B cell (primary cell): ENCODE measurements at regions of chr6 and their contacts with region 1.

Region 1: DNA sequence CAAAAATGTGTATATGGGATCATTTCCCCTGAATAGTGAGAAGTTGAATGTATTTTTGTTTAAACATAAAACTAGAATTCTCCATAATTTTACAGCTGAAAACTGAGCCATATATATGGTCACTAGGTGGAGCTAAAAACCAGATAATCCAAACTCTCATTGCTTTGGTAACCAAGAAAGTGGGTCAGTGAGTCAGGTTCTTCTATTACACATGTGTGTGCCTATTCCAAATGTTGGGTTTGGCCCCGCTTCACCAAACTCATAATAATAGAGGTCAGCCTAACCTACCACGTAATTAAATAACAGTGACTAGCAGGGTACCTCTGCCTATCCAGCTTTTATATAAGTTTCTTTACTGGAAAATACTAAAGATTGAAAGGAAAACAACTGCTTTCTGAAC is 19.3 kb upstream of the RNGTT start:
- DNase-seq: peak; percentile 73
- ATAC-seq: peak; percentile 63
- H3K4me3 ChIP-seq: no peak overlapping the region
- H3K4me3 Mint-ChIP-seq: no peak overlapping the region
- H3K27ac ChIP-seq: no peak overlapping the region
- H3K27ac Mint-ChIP-seq: no peak overlapping the region
- H3K4me1 ChIP-seq: no peaks in the 10 kb centered on the region
- H3K4me1 Mint-ChIP-seq: no peaks in the 10 kb centered on the region
- H3K27me3 ChIP-seq: no peaks in the 10 kb centered on the region
- H3K27me3 Mint-ChIP-seq: no peaks in the 10 kb centered on the region
- CTCF ChIP-seq: peak; percentile 88

Region 2: DNA sequence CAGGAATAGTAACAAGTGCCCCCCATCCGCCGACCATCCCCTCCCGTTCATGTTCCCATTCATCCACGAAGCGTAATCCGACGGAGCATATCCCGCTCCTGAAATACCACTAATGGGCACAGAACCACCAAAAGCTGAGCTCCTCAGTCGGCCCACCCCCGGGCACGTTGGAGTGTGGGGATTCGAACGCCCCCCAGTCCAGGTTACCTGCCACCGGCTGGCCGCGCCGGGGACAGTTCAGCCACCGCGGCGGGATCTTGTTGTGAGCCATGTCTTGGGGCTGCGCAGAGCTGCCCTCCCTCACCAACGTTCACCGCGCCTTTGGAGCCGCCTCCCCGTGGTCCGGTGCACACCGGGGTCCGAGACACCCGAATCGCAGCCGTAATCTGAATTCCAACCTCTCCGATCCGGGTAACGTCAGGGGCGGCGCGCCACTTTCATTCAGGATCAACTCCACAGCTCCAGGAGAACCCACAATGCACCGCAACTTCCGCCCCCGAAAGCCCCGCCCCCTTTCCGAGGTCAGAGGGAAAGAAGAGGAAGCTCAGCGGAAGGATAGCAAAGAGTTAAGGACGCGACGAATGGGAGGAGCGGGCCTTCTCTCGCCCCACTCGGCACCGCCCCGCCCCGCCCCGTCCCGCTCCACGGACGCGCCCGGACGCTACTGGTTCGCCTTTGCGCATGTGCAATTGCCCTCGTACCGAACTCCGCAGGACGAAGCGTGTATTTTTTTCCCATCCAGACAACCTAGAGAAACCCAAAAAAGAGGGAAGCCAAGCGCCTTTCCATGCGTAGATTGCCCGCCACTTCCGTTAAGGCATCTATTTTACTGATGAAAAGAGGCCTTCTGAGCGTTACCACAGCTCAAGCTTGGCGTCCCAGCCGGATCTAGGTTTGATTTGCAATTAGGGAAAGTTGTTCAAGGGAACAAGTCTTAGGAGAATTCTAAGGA is 19.3 kb before region 1 on chr6 and contains the start of gene RNGTT:
- CTCF ChIA-PET with region 1: interaction called, 14 read pairs
- POLR2A ChIA-PET with region 1: no interaction called
- intact Hi-C with region 1: no loop called
- DNase-seq: peak; percentile 97
- ATAC-seq: peak; percentile 100
- H3K4me3 ChIP-seq: peak within 1 kb of the TSS; percentile 92 to 94 (median 94)
- H3K4me3 Mint-ChIP-seq: peak within 1 kb of the TSS; percentile 98
- H3K27ac ChIP-seq: peak within 1 kb of the TSS; percentile 64 to 87
- H3K27ac Mint-ChIP-seq: peak within 1 kb of the TSS; percentile 96
- H3K4me1 ChIP-seq: peaks cover 10 to 17% of the 10 kb centered on the region in 2 donors
- H3K4me1 Mint-ChIP-seq: peaks cover 34% of the 10 kb centered on the region
- H3K27me3 ChIP-seq: no peaks in the 10 kb centered on the region
- H3K27me3 Mint-ChIP-seq: no peaks in the 10 kb centered on the region
- CTCF ChIP-seq: no peak
- total RNA-seq, gene RNGTT: 29.1 and 34.0 TPM in 2 replicates

Region 3: DNA sequence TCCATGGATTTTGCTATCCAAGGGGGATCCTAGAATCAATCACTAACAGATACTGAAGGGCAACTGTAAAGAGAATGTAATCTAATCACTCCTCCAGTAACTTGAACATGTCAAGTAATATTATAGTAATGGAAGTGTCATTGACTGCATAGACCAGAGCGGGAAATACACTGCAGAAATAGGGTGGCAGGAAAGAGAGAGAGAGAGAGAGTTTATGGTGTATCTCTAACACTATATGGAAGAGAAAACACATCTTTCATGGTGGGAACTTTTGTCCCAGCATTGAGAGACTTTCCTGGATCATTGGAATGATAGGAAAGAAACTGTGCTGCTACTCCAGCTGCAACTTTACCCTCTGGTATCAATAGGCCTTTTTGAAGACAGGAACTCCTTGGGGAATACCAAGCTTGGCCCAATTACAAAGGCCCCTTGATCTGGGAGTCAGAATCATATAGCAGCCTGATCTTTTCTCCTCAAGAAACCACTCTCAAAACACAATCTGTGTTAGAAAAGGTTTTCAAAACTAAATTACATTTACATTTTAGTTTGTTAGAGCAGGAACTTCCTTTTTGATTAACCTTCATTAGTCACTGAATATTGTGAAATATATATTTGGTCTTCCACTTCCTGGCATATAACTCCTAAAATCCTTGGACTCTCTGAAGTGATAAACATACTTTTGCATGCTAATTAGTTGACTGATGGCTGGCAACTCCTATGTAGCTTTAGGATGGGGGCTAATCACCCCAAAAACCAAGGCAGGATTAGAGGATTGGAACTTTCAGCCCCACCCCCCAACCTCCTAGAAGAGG is 10.2 kb after region 1 on chr6:
- CTCF ChIA-PET with region 1: interaction called, 11 read pairs
- POLR2A ChIA-PET with region 1: no interaction called
- intact Hi-C with region 1: no loop called
- DNase-seq: no peak
- ATAC-seq: no peak
- H3K4me3 ChIP-seq: no peak overlapping the region
- H3K4me3 Mint-ChIP-seq: no peak overlapping the region
- H3K27ac ChIP-seq: no peak overlapping the region
- H3K27ac Mint-ChIP-seq: no peak overlapping the region
- H3K4me1 ChIP-seq: no peaks in the 10 kb centered on the region
- H3K4me1 Mint-ChIP-seq: peaks cover 1% of the 10 kb centered on the region
- H3K27me3 ChIP-seq: no peaks in the 10 kb centered on the region
- H3K27me3 Mint-ChIP-seq: no peaks in the 10 kb centered on the region
- CTCF ChIP-seq: no peak

Region 4: DNA sequence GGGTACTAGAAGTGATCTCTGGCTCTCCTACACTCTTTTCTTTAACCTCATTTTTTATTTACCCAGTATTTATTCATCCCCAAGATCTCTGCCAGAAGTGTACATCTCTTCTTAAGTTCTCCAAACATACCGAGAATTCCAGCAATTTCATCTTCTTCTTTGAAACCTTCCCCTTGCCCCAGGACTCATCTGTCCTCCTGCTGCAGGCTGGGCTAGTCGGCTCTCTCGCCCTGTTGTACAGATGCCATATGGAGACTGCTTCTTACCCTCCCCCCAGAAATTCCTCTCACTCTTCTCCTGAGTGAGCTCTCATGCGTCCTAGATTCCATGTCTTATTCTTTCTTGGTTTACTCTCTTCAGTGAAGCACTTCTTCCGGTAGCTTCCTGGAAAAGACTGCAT is 75.9 kb after region 1 on chr6:
- CTCF ChIA-PET with region 1: no interaction called
- POLR2A ChIA-PET with region 1: no interaction called
- intact Hi-C with region 1: no loop called
- DNase-seq: no peak
- ATAC-seq: no peak
- H3K4me3 ChIP-seq: no peak overlapping the region
- H3K4me3 Mint-ChIP-seq: no peak overlapping the region
- H3K27ac ChIP-seq: no peak overlapping the region
- H3K27ac Mint-ChIP-seq: no peak overlapping the region
- H3K4me1 ChIP-seq: no peaks in the 10 kb centered on the region
- H3K4me1 Mint-ChIP-seq: no peaks in the 10 kb centered on the region
- H3K27me3 ChIP-seq: no peaks in the 10 kb centered on the region
- H3K27me3 Mint-ChIP-seq: peaks cover 12% of the 10 kb centered on the region
- CTCF ChIP-seq: no peak

Region 5: DNA sequence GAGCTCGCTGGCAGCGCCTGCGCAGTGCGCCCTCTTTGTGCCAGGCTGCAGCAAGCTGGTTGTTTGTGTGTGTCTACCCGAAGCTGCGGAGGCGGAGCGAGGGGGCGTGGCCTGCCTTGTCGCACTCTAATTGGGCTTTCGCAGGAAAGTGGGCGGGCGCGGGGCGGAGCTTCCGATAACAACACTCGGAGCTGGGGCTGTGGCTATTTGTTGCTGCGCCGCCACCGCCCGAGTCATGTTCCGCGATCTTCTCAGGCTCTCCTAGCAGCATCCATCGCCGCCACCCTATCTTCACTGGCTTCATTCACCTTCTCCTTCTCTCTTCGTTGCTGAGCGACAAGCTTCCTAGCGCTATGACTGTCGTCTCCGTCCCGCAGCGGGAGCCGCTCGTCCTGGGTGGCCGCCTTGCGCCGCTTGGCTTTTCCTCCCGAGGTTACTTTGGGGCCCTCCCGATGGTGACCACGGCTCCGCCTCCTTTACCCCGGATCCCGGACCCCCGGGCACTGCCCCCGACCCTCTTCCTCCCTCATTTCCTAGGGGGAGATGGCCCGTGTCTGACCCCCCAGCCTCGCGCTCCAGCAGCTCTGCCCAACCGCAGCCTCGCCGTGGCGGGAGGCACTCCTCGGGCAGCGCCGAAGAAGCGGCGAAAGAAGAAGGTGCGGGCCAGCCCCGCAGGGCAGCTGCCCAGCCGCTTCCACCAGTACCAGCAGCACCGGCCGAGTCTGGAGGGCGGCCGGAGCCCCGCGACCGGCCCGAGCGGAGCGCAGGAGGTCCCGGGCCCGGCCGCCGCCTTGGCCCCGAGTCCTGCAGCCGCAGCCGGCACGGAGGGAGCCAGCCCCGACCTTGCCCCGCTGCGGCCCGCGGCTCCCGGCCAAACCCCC is 98.1 kb after region 1 on chr6 and contains the start of gene PNRC1:
- CTCF ChIA-PET with region 1: interaction called, 33 read pairs
- POLR2A ChIA-PET with region 1: interaction called, 4 read pairs
- intact Hi-C with region 1: loop called (anchors 5 kb)
- DNase-seq: peak; percentile 100
- ATAC-seq: peak; percentile 76
- H3K4me3 ChIP-seq: peak within 1 kb of the TSS; percentile 81 to 100 (median 98)
- H3K4me3 Mint-ChIP-seq: peak within 1 kb of the TSS; percentile 99
- H3K27ac ChIP-seq: peak within 1 kb of the TSS; percentile 99
- H3K27ac Mint-ChIP-seq: peak within 1 kb of the TSS; percentile 98
- H3K4me1 ChIP-seq: peaks cover 25 to 29% of the 10 kb centered on the region in 2 donors
- H3K4me1 Mint-ChIP-seq: peaks cover 38% of the 10 kb centered on the region
- H3K27me3 ChIP-seq: no peaks in the 10 kb centered on the region
- H3K27me3 Mint-ChIP-seq: no peaks in the 10 kb centered on the region
- CTCF ChIP-seq: no peak
- total RNA-seq, gene PNRC1: 460 and 486 TPM in 2 replicates

Region 6: DNA sequence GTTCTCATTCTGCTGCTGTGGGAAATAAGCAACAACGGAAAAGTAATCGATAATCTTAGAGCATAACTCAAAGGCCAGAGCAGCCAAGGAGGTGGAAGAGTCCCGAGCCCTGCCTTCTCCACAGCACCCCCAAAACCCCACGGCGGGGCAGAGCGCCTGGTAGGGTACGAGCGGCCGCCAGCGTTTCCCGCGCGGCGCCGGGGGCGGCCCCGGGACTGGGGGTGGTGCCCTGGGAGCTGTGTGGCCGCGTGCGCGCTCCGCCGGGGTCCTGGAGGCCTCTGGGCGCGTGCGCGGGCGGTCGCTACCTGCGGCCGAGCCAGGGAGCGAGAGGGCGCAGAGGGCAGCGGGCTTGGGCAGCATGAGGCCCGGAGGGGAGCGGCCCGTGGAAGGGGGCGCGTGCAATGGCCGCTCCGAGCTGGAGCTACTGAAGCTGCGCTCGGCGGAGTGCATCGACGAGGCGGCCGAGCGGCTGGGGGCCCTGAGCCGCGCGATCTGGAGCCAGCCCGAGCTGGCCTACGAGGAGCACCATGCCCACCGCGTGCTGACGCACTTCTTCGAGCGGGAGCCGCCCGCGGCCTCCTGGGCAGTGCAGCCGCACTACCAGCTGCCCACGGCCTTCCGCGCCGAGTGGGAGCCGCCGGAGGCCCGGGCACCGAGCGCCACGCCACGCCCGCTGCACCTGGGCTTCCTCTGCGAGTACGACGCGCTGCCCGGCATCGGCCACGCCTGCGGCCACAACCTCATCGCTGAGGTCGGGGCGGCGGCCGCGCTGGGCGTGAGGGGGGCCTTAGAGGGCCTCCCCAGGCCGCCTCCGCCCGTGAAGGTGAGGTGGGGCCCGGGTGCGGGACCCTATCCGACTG is 163.3 kb after region 1 on chr6 and contains the start of gene PM20D2:
- CTCF ChIA-PET with region 1: interaction called, 7 read pairs
- POLR2A ChIA-PET with region 1: no interaction called
- intact Hi-C with region 1: loop called (anchors 2 kb)
- DNase-seq: peak; percentile 78
- ATAC-seq: peak; percentile 77
- H3K4me3 ChIP-seq: peak within 1 kb of the TSS; percentile 65 to 85 (median 73)
- H3K4me3 Mint-ChIP-seq: peak within 1 kb of the TSS; percentile 95
- H3K27ac ChIP-seq: peak within 1 kb of the TSS; percentile 87 to 88
- H3K27ac Mint-ChIP-seq: peak within 1 kb of the TSS; percentile 94
- H3K4me1 ChIP-seq: peaks cover 9 to 11% of the 10 kb centered on the region in 2 donors
- H3K4me1 Mint-ChIP-seq: peaks cover 28% of the 10 kb centered on the region
- H3K27me3 ChIP-seq: no peaks in the 10 kb centered on the region
- H3K27me3 Mint-ChIP-seq: no peaks in the 10 kb centered on the region
- CTCF ChIP-seq: no peak
- total RNA-seq, gene PM20D2: 15.3 and 16.4 TPM in 2 replicates

Region 7: GRCh38 chr6:89242574-89243330 is 260.0 kb after region 1 on chr6:
- CTCF ChIA-PET with region 1: interaction called, 94 read pairs
- POLR2A ChIA-PET with region 1: no interaction called
- intact Hi-C with region 1: loop called (anchors 1 kb)
- DNase-seq: peak; percentile 28
- ATAC-seq: no peak
- H3K4me3 ChIP-seq: no peak overlapping the region
- H3K4me3 Mint-ChIP-seq: no peak overlapping the region
- H3K27ac ChIP-seq: no peak overlapping the region
- H3K27ac Mint-ChIP-seq: no peak overlapping the region
- H3K4me1 ChIP-seq: peaks cover 13 to 15% of the 10 kb centered on the region in 2 donors
- H3K4me1 Mint-ChIP-seq: peaks cover 15% of the 10 kb centered on the region
- H3K27me3 ChIP-seq: peaks cover 0 to 19% (median 2%) of the 10 kb centered on the region in 4 experiments
- H3K27me3 Mint-ChIP-seq: peaks cover 34% of the 10 kb centered on the region
- CTCF ChIP-seq: peak; percentile 23

Region 8: GRCh38 chr6:89610149-89610642 is 627.5 kb after region 1 on chr6:
- CTCF ChIA-PET with region 1: interaction called, 48 read pairs
- POLR2A ChIA-PET with region 1: no interaction called
- intact Hi-C with region 1: loop called (anchors 1 kb)
- DNase-seq: peak; percentile 80
- ATAC-seq: peak; percentile 91
- H3K4me3 ChIP-seq: no peak overlapping the region
- H3K4me3 Mint-ChIP-seq: no peak overlapping the region
- H3K27ac ChIP-seq: no peak overlapping the region
- H3K27ac Mint-ChIP-seq: no peak overlapping the region
- H3K4me1 ChIP-seq: no peaks in the 10 kb centered on the region
- H3K4me1 Mint-ChIP-seq: no peaks in the 10 kb centered on the region
- H3K27me3 ChIP-seq: no peaks in the 10 kb centered on the region
- H3K27me3 Mint-ChIP-seq: no peaks in the 10 kb centered on the region
- CTCF ChIP-seq: peak; percentile 91